ENCODE measurements at regions of chr19 and their contacts with region 1.

Region 1: GRCh38 chr19:3324321-3324856 is 42.0 kb upstream of the NFIC start:
- DNase-seq: peak in 31 of 42 donors; percentile 23 to 81 (median 50)

Region 2: GRCh38 chr19:3429581-3430080 is 105.2 kb after region 1 on chr19:
- intact Hi-C with region 1: loop called (anchors 5 kb)
- DNase-seq: peak; percentile 60 to 94 (median 85)